Mammary epithelial cell (primary cell): ENCODE measurements at regions of chr11 and their contacts with region 1.

Region 1: DNA sequence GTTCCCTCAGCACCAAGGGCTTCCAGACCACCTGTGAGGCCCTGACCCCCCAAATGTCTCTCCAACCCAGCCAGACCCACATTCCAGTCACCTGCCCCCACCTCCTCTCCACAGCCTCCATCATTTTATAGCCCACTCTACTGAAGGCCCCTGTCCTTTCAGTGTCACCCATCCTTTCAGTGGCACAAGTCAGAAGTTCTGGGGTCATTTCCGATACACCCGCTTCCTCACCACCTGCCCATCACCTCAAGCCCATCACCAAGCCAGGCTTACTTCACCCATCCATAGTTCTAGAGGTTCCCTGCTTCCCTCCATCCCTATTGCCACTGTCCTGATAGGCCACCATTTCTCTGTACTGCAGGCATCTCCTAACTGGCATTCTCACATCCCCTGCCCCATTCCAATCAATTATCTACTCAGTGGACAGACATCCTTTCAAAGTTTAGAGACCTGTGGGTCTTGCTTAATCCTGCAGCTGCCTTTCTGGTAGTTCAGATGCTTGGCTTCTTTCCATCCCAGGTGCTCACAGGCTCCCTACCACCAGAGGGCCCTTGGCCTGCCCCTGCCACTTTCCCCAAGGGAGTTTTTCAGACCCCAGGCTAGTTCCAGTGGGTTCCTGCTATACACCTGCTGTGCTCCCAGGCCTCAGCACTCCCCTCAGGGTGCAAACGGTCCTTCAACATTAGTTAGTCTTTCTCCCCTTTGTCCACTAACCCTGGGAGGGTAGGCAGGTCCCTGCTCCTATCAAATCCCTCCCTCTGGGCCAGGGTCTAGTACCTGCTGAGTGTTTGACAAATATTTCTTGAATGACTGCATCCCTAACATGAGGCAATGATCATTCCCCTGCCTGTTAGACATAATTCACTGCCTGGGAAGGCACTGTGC is 7.6 kb downstream of the KCNQ1OT1 start:
- DNase-seq: no peak
- H3K4me3 ChIP-seq: no peak overlapping the region
- H3K27ac ChIP-seq: no peak overlapping the region
- H3K4me1 ChIP-seq: no peaks in the 10 kb centered on the region
- H3K27me3 ChIP-seq: no peaks in the 10 kb centered on the region
- CTCF ChIP-seq: peak; percentile 33 to 59

Region 2: DNA sequence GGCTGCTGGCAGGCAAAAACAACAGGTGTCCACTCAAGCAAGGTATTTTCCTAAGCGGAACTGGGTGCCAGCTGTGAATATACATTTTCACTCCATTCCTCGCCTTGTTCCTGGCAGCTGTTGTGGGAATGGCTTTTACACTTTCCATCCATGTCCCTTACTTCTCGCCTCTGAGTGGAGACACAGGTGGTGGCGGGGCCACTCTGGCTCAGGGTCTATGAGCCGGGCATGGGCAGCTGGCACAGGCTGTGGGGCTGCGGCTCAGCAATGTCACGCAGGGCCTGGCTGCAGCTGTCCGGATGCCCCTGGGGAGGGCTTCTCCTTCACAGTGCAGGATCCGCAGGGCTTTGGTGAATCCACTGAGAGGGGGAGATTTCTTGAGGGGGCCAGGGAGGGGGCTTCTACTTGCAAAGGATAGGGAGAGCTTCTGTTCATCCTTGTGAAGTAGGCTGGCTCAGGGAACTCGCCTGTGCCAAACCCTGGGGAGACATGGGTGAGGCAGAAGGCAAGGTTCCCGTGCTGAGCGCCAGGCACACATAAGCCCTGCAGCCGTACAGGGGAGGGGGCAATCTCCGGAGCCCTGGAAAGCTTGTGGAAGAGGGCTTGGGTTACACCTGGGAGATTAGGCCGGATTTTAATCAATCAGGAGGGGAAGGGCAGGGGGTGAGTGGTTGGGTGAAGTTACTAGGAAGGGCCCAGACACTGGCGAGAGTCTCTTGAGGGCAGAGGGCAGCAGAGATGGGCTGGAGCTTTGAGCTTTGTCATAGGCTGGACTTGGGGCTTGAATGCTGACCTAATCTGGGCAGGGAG is 38.1 kb before region 1 on chr11:
- CTCF ChIA-PET with region 1: no interaction called
- dilution Hi-C with region 1: loop called (anchors 5 kb)
- in situ Hi-C with region 1: no loop called
- intact Hi-C with region 1: no loop called
- DNase-seq: no peak
- H3K4me3 ChIP-seq: no peak overlapping the region
- H3K27ac ChIP-seq: no peak overlapping the region
- H3K4me1 ChIP-seq: no peaks in the 10 kb centered on the region
- H3K27me3 ChIP-seq: no peaks in the 10 kb centered on the region
- CTCF ChIP-seq: no peak

Region 3: DNA sequence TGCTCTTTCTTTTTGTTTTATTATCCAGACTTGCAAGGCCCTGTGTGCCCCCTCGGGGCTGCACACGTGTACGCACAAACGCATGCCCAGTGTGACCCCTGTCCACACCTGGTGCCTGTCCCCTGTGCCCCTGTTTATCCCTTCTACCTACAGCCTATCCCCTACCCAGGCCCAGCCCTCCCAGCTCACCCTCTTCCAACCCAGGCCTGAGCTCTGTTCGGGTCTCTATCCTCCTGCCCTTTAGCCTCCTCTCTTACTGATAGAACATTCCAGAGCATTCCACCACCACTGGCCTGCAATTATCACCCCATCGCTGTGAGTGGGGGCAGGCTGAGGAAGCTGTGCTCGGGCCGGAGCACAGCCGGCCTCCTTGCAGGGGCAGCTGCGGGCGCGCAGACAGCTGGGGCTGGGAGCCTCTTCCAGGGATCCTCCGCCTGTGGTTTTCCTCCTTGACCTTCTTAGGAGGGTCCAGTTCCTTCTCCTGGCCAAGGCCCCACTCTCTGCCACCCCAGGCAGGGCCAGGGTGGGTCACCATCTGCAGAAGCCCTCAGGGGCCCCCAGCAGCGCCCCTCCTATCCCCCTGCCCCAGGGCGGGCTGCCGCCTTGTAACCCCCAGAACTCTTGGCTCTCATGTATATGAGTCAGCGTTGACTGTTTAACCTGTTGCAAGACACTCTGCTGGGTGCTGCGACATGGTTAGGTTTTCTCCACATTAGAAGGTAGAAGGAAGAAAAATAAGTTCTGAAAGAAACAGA is 49.3 kb after region 1 on chr11:
- CTCF ChIA-PET with region 1: no interaction called
- dilution Hi-C with region 1: no loop called
- in situ Hi-C with region 1: no loop called
- intact Hi-C with region 1: no loop called
- DNase-seq: no peak
- H3K4me3 ChIP-seq: no peak overlapping the region
- H3K27ac ChIP-seq: no peak overlapping the region
- H3K4me1 ChIP-seq: no peaks in the 10 kb centered on the region
- H3K27me3 ChIP-seq: peaks cover 2% of the 10 kb centered on the region
- CTCF ChIP-seq: no peak

Region 4: DNA sequence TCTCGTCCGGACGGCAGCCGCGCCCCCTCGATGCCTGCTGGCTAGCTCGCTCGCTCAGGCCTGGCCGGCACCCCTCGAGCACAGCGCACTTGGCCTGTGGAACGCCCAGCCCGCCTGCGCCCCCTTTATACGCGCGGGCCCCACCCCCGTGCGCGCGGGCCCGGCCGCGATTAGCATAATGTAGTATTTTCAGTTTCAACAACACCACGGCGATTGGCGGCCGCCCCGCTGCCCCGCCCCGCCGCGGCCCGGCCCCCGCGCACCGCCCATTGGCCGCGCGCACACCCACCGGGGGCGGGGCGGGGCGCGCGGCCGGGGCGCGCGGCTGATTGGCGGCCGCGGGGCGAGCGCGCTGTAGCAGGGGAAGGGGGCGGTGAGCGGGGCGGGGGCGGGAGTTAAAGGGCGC is 193.4 kb after region 1 on chr11 and contains the start of gene CDKN1C:
- CTCF ChIA-PET with region 1: no interaction called
- dilution Hi-C with region 1: no loop called
- in situ Hi-C with region 1: no loop called
- intact Hi-C with region 1: loop called (anchors 1 kb)
- DNase-seq: peak; percentile 65
- H3K4me3 ChIP-seq: peak within 1 kb of the TSS; percentile 35 to 63 (median 54)
- H3K27ac ChIP-seq: no peak within 1 kb of the TSS
- H3K4me1 ChIP-seq: peaks cover 17% of the 10 kb centered on the region
- H3K27me3 ChIP-seq: peaks cover 19% of the 10 kb centered on the region
- CTCF ChIP-seq: no peak
- total RNA-seq, gene CDKN1C: 0.38 to 0.50 TPM